ENCODE measurements at regions of chr12 and their contacts with region 1.

Region 1: DNA sequence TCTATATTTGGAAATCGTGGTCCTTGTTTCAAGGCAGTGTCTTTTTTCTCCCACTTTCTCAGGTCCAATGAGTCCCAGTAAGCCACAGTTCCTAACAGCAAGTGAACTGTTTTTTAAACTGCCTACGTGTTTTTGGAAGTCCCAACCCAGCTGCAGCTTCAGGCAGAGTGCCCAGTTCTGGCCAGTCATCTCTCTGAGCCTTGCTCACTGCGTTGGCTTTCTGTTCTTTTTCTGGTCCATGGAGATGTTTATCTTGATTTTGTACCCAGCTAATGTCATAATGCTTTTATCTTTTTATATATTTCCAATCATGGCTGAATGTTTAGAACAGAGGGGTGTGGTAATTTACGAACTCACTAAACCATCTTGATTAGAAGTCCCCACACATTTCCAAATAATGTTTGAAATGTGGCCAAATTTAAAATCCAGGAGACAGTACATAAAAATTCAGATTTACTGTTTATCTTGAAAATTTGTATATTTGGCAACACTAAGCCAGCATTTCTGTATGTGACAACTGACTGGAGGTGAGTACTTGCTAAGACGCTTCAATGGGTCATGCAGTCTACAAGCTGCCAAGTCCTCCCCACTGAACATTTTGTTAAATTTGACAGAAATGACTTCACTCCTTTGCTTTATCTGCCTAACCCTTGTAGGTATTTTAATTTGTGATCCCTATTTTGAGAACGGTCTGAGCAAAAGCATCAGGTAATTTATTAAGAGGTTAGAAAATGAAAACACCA is 46.1 kb upstream of the OTOGL start:
- DNase-seq: peak; percentile 58 to 92
- H3K4me3 ChIP-seq: peak overlapping the region; percentile 19 to 24
- H3K27ac ChIP-seq: peak overlapping the region; percentile 73 to 80
- H3K4me1 ChIP-seq: peaks cover 0 to 18% of the 10 kb centered on the region in 2 donors
- H3K27me3 ChIP-seq: no peaks in the 10 kb centered on the region
- CTCF ChIP-seq: no peak

Region 2: GRCh38 chr12:78490861-78491260 is 1562.4 kb before region 1 on chr12:
- intact Hi-C with region 1: no loop called
- DNase-seq: no peak
- H3K4me3 ChIP-seq: no peak overlapping the region
- H3K27ac ChIP-seq: no peak overlapping the region
- H3K4me1 ChIP-seq: no peaks in the 10 kb centered on the region
- H3K27me3 ChIP-seq: no peaks in the 10 kb centered on the region
- CTCF ChIP-seq: no peak

Region 3: GRCh38 chr12:79555028-79555930 is 497.9 kb before region 1 on chr12:
- intact Hi-C with region 1: loop called (anchors 5 kb)
- DNase-seq: no peak
- H3K4me3 ChIP-seq: no peak overlapping the region
- H3K27ac ChIP-seq: peak overlapping the region; percentile 67 to 76
- H3K4me1 ChIP-seq: peaks cover 3 to 59% of the 10 kb centered on the region in 2 donors
- H3K27me3 ChIP-seq: no peaks in the 10 kb centered on the region
- CTCF ChIP-seq: peak; percentile 38 to 70 (median 61)

Region 4: GRCh38 chr12:79826267-79827128 is 226.7 kb before region 1 on chr12:
- intact Hi-C with region 1: loop called (anchors 10 kb)
- DNase-seq: no peak
- H3K4me3 ChIP-seq: no peak overlapping the region
- H3K27ac ChIP-seq: no peak overlapping the region
- H3K4me1 ChIP-seq: peaks cover 0 to 13% of the 10 kb centered on the region in 2 donors
- H3K27me3 ChIP-seq: no peaks in the 10 kb centered on the region
- CTCF ChIP-seq: no peak

Region 5: GRCh38 chr12:80017261-80017870 is 35.9 kb before region 1 on chr12:
- intact Hi-C with region 1: loop called (anchors 5 kb)
- DNase-seq: no peak
- H3K4me3 ChIP-seq: peak overlapping the region in 1 of 2 donors; percentile 33
- H3K27ac ChIP-seq: peak overlapping the region; percentile 25 to 68
- H3K4me1 ChIP-seq: peaks cover 0 to 14% of the 10 kb centered on the region in 2 donors
- H3K27me3 ChIP-seq: no peaks in the 10 kb centered on the region
- CTCF ChIP-seq: no peak

Measured in ascending aorta (tissue), 2 donors.